HEK293 (cell line): ENCODE measurements at regions of chr7 and their contacts with region 1.

Region 1: GRCh38 chr7:34321000-34321581 is 336.9 kb upstream of the NPSR1 start:
- H3K4me3 ChIP-seq: peak overlapping the region; percentile 26
- H3K27ac ChIP-seq: no peak overlapping the region
- H3K4me1 ChIP-seq: no peaks in the 10 kb centered on the region; the same call in 1 of the 2 replicates
- CTCF ChIP-seq: no peak

Region 2: DNA sequence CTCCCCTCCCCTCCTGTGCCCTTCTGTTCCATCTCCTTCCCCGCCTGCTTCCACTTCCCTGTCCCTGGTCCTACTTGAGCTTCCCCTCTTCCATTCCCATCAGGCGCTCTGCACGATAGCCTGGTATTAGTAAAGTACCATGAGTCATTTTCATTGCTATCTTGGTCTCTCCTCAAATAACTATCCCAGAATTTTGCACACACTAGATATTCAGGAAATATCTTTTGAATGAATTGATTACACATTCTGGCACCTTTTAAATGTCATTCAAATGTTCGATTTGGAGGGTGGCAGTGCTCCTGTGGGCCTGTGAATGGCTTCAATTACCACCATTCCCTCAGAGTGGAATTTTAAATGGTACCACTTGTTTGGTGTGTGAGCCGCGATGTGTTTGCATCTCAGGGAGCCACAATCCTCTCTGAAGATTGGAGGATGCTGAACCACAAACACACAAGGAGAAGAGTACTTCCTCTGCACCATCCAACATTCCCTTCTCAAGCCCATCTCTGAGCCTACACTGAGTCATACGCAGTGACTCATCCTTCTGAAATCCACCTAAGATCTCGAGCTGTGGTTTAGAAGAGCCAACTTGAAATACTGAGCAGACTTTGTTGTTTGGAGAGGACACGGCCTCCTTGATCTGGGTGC is 334.0 kb before region 1 on chr7:
- CTCF ChIA-PET with region 1: interaction called, 10 read pairs
- POLR2A ChIA-PET with region 1: no interaction called
- H3K4me3 ChIP-seq: no peak overlapping the region
- H3K27ac ChIP-seq: no peak overlapping the region
- H3K4me1 ChIP-seq: no peaks in the 10 kb centered on the region
- CTCF ChIP-seq: no peak

Region 3: GRCh38 chr7:34133983-34134782 is 186.9 kb before region 1 on chr7:
- CTCF ChIA-PET with region 1: interaction called, 20 read pairs
- POLR2A ChIA-PET with region 1: no interaction called
- H3K4me3 ChIP-seq: no peak overlapping the region
- H3K27ac ChIP-seq: no peak overlapping the region
- H3K4me1 ChIP-seq: no peaks in the 10 kb centered on the region
- CTCF ChIP-seq: peak; percentile 36; the same call in 1 of the 2 replicates

Region 4: GRCh38 chr7:34430458-34430857 is 109.4 kb after region 1 on chr7:
- CTCF ChIA-PET with region 1: interaction called, 22 read pairs
- POLR2A ChIA-PET with region 1: no interaction called
- H3K4me3 ChIP-seq: no peak overlapping the region
- H3K27ac ChIP-seq: no peak overlapping the region
- H3K4me1 ChIP-seq: no peaks in the 10 kb centered on the region
- CTCF ChIP-seq: no peak

Region 5: DNA sequence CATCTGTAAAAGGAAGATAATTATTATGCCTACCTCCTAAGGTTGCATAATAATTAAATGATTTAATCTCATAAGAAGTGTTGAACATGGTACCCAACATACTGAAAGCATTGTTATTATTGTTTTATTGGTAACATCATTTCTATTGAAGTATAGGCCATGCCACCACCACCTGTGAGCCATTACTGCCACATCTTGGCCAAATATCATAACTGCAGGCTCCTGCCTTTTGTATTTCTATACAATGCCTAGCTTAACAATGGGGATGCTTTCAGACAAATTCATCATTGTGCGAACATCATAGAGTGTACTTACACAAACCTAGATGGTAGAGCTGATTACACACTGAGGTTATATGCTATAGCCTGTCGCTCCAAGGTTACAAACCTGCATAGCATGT is 275.8 kb after region 1 on chr7:
- CTCF ChIA-PET with region 1: interaction called, 16 read pairs
- POLR2A ChIA-PET with region 1: no interaction called
- H3K4me3 ChIP-seq: no peak overlapping the region
- H3K27ac ChIP-seq: no peak overlapping the region
- H3K4me1 ChIP-seq: no peaks in the 10 kb centered on the region
- CTCF ChIP-seq: no peak